GM10248 (cell line): ENCODE measurements at regions of chr5 and their contacts with region 1.

Region 1: GRCh38 chr5:80204808-80205614 is 50.8 kb downstream of the SERINC5 start:
- DNase-seq: no peak
- CTCF ChIP-seq: peak; percentile 5

Region 2: DNA sequence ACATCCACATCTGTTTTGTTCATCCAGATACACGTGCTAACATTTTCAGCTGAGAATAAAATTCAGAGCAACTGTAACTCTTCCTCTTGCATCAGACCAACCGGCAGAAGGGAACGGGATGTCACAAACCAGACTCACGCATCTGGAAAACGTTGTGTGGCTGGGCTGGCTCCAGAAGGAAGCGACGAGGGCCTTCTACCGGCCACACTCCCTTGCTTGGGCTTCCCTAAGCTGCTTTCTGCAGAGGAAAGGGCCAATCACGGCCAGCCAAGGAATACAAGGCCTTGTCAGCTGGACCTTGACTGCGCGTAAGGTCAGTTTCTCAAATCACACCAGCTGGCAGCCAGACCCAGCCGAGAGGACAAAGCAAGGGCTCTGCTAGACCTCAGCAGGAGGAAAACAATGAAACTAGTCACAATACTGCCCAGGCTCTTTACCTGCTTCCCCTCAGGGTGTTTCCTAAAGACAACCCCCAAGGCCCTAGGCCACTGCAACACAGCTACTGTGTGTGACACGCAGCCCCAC is 63.8 kb before region 1 on chr5:
- CTCF ChIA-PET with region 1: no interaction called
- POLR2A ChIA-PET with region 1: no interaction called
- DNase-seq: no peak
- CTCF ChIP-seq: no peak

Region 3: GRCh38 chr5:80191991-80192398 is 13.0 kb before region 1 on chr5:
- CTCF ChIA-PET with region 1: interaction called, 10 read pairs
- POLR2A ChIA-PET with region 1: no interaction called
- DNase-seq: no peak
- CTCF ChIP-seq: no peak